PC-9 (cell line): ENCODE measurements at regions of chr6 and their contacts with region 1.

Region 1: DNA sequence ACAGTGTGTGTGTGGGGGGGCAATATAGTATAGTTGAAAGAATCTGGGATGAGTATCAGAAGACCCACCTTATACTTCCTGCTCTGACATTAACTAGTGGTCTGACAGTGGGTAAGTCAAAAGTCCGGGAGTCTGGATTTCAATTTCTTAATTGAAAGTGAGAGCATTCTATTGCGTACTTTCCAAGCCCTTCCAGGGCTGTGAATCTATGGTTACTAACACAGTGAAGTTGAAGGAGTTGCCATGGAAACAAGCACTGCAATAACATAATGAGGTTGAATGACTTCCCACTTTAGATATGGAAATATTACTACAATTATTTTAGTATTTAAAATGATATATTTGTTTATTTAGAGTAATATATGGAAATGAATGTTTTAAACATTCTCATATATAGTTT is 80.2 kb downstream of the MLIP start:
- DNase-seq: no peak
- H3K4me3 ChIP-seq: no peak overlapping the region
- H3K27ac ChIP-seq: no peak overlapping the region
- H3K4me1 ChIP-seq: no peaks in the 10 kb centered on the region
- H3K27me3 ChIP-seq: no peaks in the 10 kb centered on the region
- CTCF ChIP-seq: no peak

Region 2: DNA sequence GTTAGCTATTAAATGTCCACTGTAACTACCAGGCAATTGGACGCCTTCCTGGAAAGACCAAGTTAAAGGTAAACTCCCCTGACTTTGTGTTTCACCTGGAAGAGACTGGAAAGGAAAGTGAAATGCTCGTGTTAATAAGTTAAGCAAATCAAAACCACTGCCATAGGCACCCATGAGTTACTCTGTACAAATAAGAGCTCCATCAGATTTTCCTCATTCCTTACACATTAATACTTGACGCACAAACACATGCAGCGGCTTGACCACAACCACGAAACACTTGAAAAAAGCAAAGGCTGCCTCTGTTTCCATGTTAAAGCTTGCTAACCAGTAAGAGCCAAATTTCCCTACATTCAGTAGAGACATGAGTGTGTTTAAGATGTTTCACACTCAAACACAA is 1062.6 kb before region 1 on chr6:
- CTCF ChIA-PET with region 1: no interaction called
- POLR2A ChIA-PET with region 1: interaction called, 13 read pairs
- intact Hi-C with region 1: no loop called
- DNase-seq: peak in 1 of 2 experiments; percentile 59
- H3K4me3 ChIP-seq: no peak overlapping the region
- H3K27ac ChIP-seq: no peak overlapping the region
- H3K4me1 ChIP-seq: peaks cover 6% of the 10 kb centered on the region; the same call in 1 of the 2 replicates
- H3K27me3 ChIP-seq: no peaks in the 10 kb centered on the region
- CTCF ChIP-seq: no peak